ENCODE measurements at regions of chr11 and their contacts with region 1.

Region 1: DNA sequence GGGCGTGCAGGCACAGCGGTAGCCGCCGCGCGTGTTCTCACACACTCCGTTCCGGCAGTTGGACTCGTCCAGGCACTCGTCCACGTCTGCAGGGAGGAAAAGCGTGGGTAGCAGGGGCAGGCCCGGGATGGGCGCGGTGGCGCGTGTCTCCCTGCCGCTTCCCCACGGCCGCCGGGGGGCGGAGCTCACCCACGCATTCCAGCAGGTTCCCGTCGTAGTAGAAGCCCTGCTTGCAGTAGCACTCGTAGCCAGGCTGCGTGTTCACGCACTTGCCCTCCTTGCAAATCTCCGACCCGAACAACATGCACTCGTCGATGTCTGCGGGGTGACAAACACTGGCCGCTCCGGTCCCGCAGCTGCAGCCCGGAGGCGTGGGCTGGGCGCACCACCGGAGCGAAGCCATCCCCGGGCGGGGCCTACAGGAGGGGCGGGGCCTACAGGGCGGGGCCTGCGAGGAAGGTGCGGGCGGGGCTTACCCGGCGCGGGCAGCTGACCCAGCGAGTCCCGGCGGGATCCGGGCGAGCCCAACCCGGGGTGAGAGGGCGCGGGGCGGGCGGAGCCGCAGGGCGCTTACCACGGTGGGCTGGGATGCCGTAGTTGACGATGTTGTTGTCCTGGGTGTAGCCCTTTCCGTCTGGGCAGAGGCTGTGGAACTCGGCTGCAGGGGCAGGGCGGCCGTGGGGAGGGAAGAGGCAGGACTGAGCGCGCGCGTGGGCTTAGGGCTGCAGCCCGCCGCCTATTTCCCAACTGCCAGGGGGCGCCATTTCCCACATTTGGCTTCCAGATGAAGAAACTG is 15.6 kb downstream of the SCYL1 start:
- DNase-seq: peak; percentile 93
- H3K4me3 Mint-ChIP-seq: peak overlapping the region; percentile 80
- H3K27ac Mint-ChIP-seq: peak overlapping the region; percentile 82
- H3K4me1 Mint-ChIP-seq: peaks cover 16% of the 10 kb centered on the region
- H3K27me3 Mint-ChIP-seq: no peaks in the 10 kb centered on the region

Region 2: DNA sequence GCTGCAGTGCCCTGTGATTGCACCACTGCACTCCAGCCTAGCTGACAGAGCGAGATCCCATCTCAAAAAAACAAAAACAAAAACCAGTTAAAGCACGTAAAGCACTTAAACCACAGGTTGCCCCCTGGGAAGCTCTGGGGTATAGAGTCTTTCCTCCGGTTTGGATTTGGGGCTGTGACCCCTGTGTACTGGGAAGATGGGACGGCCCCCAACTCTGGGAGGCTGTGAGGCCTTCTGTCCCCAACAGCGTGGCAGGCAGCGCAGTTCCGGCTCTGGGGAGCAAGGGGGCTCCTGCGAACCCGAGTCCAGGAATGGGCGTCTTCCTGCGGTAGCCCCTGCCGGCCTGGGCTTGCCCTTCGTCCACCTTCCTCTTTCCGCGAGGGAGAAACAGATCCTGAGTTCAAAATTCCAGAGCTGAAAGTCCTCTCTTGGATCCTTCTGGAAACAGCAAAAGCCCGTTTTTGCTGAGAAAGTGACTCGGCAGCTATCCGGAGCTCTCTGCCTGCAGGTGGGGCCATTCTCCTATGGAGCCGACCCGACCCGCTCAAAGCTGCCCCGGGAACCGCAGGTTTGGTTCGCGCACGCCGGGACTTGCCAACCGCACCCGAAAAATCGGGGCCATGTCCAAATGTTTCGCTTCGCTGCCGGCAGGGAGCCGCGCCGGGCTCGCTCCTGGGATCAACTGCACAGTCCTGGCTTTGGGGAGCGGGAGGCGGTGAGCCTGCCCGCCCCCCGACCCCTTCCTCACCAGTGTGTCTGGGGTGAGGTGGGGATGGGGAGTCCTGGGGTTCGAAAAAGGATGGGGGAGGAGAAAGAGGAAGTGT is 315.0 kb before region 1 on chr11:
- CTCF ChIA-PET with region 1: no interaction called
- intact Hi-C with region 1: no loop called
- DNase-seq: peak; percentile 81
- H3K4me3 Mint-ChIP-seq: peak overlapping the region; percentile 74
- H3K27ac Mint-ChIP-seq: no peak overlapping the region
- H3K4me1 Mint-ChIP-seq: peaks cover 11% of the 10 kb centered on the region
- H3K27me3 Mint-ChIP-seq: peaks cover 18% of the 10 kb centered on the region

Region 3: GRCh38 chr11:65382033-65382807 is 158.3 kb before region 1 on chr11 and contains the start of gene SLC25A45:
- CTCF ChIA-PET with region 1: no interaction called
- intact Hi-C with region 1: loop called (anchors 1 kb)
- DNase-seq: peak; percentile 97
- H3K4me3 Mint-ChIP-seq: peak within 1 kb of the TSS; percentile 96
- H3K27ac Mint-ChIP-seq: peak within 1 kb of the TSS; percentile 100
- H3K4me1 Mint-ChIP-seq: peaks cover 48% of the 10 kb centered on the region
- H3K27me3 Mint-ChIP-seq: no peaks in the 10 kb centered on the region
- total RNA-seq, gene SLC25A45: 10.4 to 12.1 TPM

Region 4: GRCh38 chr11:65530157-65530496 is 10.4 kb before region 1 on chr11:
- CTCF ChIA-PET with region 1: interaction called, 29 read pairs
- intact Hi-C with region 1: no loop called
- DNase-seq: no peak
- H3K4me3 Mint-ChIP-seq: no peak overlapping the region
- H3K27ac Mint-ChIP-seq: no peak overlapping the region
- H3K4me1 Mint-ChIP-seq: peaks cover 35% of the 10 kb centered on the region
- H3K27me3 Mint-ChIP-seq: no peaks in the 10 kb centered on the region

Region 5: DNA sequence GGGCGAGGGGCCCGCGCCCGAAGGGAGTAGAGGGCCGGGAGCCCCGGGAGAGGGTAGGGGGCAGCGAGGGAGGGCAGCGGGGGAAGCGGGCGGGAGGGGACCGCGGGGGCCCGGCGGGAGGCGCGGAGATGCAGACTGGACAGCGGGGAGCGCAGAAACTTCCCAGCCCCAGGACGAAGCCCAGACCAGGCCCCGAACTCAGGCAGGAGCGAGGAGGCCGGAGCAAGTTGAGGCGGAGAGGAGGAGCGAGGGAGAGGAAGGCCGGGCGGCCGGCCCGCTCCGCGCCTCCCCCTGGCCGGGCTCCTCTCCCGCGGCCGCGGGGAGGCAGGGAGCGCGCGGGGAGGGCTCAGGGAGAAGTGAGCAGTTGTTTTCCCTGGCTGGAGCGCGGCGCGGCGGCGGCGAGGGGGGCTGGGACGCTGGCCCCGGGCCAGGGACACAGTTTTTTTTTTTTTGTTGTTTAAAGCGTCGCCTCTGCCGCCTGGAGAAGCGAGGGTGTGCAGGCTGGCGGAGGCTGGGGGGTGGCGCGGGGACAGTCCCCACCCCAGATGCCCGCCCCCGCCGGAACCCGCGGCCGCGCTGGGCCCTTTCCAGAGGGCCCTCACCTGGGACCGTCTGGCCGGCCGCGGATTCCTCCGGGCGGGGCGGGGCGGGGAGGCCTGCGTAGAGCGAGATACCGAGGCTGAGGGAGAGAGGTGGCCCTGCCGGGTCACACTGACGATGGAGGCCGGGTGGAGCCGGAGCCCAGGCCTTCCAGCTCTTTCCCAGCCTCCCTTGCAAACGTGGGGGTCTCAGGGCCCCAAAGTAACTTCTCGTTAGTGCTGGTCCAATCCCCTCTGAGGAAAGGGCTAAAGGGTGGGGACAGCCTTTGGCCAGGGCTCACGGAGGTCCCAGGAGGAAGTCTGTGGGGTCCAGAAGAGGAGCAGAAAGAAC is 17.8 kb after region 1 on chr11 and contains the start of gene LTBP3:
- CTCF ChIA-PET with region 1: interaction called, 17 read pairs
- intact Hi-C with region 1: no loop called
- DNase-seq: no peak
- H3K4me3 Mint-ChIP-seq: peak within 1 kb of the TSS; percentile 77
- H3K27ac Mint-ChIP-seq: peak within 1 kb of the TSS; percentile 91
- H3K4me1 Mint-ChIP-seq: peaks cover 53% of the 10 kb centered on the region
- H3K27me3 Mint-ChIP-seq: no peaks in the 10 kb centered on the region
- total RNA-seq, gene LTBP3: 39.7 to 45.7 TPM

Region 6: DNA sequence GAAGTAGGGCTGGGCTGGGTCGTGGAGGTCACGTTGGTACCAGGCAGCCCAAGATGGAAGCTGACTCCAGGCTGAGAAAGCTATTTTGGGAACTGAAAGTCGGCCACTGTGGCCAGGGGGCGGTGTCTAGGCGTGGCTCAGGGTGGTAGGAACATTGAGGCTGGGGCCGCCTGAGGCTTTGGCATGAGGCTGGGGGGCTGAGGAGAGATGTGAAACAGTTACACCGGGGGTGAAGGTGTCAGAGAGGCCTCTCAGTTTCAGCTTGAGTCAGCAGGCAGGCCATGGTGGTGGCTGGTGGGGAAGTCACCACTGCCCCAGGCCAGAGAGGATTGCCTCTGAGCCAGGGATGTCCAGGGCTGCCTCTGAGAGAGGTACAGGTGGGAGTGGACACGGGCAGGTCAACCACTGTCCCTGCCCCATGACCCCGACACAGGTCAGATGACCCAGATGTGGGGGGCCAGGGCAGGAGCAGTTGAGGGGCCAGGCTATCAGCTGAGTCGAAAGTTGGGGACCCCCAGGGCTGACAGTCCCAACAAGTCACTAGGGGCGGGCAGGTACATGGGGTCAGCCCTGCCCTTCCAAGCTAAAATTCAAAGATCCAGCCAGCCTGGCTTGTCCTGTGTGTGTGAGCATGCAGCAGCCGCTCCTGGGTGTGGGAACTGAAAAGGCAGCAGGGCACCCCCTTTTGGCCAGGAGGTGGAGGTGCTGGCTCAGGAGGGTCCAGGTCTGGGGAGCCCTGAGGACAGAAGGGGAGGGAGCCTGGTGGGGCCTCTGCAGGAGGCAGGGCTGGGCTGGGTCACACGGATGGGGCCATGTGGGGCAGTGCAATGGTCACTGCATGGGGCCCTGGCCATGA is 47.9 kb after region 1 on chr11:
- CTCF ChIA-PET with region 1: interaction called, 35 read pairs
- intact Hi-C with region 1: loop called (anchors 1 kb)
- DNase-seq: peak; percentile 86
- H3K4me3 Mint-ChIP-seq: no peak overlapping the region
- H3K27ac Mint-ChIP-seq: peak overlapping the region; percentile 90
- H3K4me1 Mint-ChIP-seq: peaks cover 29% of the 10 kb centered on the region
- H3K27me3 Mint-ChIP-seq: no peaks in the 10 kb centered on the region